Activated CD4-positive, alpha-beta memory T cell treated with anti-CD3 and anti-CD28 coated beads, Interleukin-2, amount 10 ng/mL, durations not matched to agents 7 days and 5 days (primary cell): ENCODE measurements at regions of chr4 and their contacts with region 1.

Region 1: GRCh38 chr4:25367004-25367621 is 9.9 kb upstream of the ANAPC4 start:
- DNase-seq: no peak
- H3K4me3 Mint-ChIP-seq: no peak overlapping the region
- H3K27ac Mint-ChIP-seq: no peak overlapping the region
- H3K4me1 Mint-ChIP-seq: no peaks in the 10 kb centered on the region
- H3K27me3 Mint-ChIP-seq: no peaks in the 10 kb centered on the region

Region 2: GRCh38 chr4:25180524-25181131 is 186.5 kb before region 1 on chr4:
- CTCF ChIA-PET with region 1: interaction called, 39 read pairs
- POLR2A ChIA-PET with region 1: no interaction called
- DNase-seq: peak; percentile 36
- H3K4me3 Mint-ChIP-seq: no peak overlapping the region
- H3K27ac Mint-ChIP-seq: no peak overlapping the region
- H3K4me1 Mint-ChIP-seq: peaks cover 15% of the 10 kb centered on the region
- H3K27me3 Mint-ChIP-seq: no peaks in the 10 kb centered on the region

Region 3: GRCh38 chr4:25343671-25344070 is 23.4 kb before region 1 on chr4:
- CTCF ChIA-PET with region 1: no interaction called
- POLR2A ChIA-PET with region 1: no interaction called
- DNase-seq: no peak
- H3K4me3 Mint-ChIP-seq: no peak overlapping the region
- H3K27ac Mint-ChIP-seq: no peak overlapping the region
- H3K4me1 Mint-ChIP-seq: no peaks in the 10 kb centered on the region
- H3K27me3 Mint-ChIP-seq: no peaks in the 10 kb centered on the region

Region 4: GRCh38 chr4:25547343-25547742 is 180.2 kb after region 1 on chr4:
- CTCF ChIA-PET with region 1: no interaction called
- POLR2A ChIA-PET with region 1: no interaction called
- DNase-seq: no peak
- H3K4me3 Mint-ChIP-seq: no peak overlapping the region
- H3K27ac Mint-ChIP-seq: no peak overlapping the region
- H3K4me1 Mint-ChIP-seq: no peaks in the 10 kb centered on the region
- H3K27me3 Mint-ChIP-seq: no peaks in the 10 kb centered on the region